MCF 10A (cell line): ENCODE measurements at regions of chrX and their contacts with region 1.

Region 1: GRCh38 chrX:49079489-49080428 is at the start of gene WDR45:
- DNase-seq: peak; percentile 68
- H3K4me3 Mint-ChIP-seq: peak within 1 kb of the TSS; percentile 86
- H3K27ac Mint-ChIP-seq: peak within 1 kb of the TSS; percentile 88
- H3K4me1 Mint-ChIP-seq: peaks cover 5% of the 10 kb centered on the region
- H3K27me3 Mint-ChIP-seq: no peaks in the 10 kb centered on the region
- CTCF ChIP-seq: no peak
- total RNA-seq, gene WDR45: 93.0 and 96.9 TPM in 2 replicates

Region 2: GRCh38 chrX:49058794-49059193 is 21.0 kb before region 1 on chrX and contains the start of gene CCDC120:
- CTCF ChIA-PET with region 1: interaction called, 5 read pairs
- POLR2A ChIA-PET with region 1: interaction called, 13 read pairs
- intact Hi-C with region 1: no loop called
- DNase-seq: peak; percentile 38
- H3K4me3 Mint-ChIP-seq: peak within 1 kb of the TSS; percentile 90
- H3K27ac Mint-ChIP-seq: peak within 1 kb of the TSS; percentile 59
- H3K4me1 Mint-ChIP-seq: no peaks in the 10 kb centered on the region
- H3K27me3 Mint-ChIP-seq: peaks cover 8% of the 10 kb centered on the region
- CTCF ChIP-seq: no peak
- total RNA-seq, gene CCDC120: 10.3 and 14.4 TPM in 2 replicates